ENCODE measurements at regions of chr11 and their contacts with region 1.

Region 1: DNA sequence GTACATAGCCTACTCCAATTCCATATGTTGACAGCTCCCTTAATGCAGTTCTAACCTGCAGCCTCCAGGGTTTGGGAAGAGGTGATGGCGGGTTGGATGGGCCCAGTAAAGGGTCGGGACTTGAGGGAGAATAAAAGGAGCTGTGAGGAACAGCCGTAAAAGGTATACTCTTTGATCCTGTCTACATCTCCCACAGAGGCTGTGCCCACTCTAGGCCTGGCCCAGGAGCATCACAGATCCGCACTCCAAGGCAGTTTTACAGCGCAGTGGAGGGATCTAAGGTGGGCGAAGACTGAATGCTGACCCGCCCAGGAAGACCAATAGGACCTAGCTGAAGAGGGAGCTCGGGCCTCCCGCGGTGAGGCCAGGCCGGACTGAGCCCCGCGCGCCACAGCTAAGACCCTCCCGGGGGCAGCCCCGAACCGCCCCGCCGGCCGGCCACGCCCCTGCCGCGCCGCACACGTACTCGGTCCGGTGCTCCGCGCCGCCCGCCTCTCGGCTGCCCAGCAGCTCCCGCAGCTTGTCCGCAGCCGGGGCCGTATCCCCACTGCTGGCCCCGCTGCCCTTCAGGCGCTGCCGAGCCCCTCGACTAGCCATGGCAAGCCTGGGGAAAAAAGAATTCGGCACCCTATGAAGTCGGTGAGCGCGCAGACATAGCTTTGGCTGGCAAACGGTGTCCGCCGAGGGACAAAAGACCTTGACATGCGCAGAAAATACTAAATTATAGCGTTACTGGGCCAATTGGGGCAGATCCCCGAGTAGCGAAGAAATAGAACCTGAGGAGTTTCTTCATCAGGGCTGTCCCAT is at the start of gene ALG9:
- DNase-seq: peak; percentile 71 to 92 (median 86)
- ATAC-seq: peak; percentile 89 to 91 (median 90)
- H3K4me3 ChIP-seq: peak within 1 kb of the TSS; percentile 72 to 79
- H3K4me3 Mint-ChIP-seq: peak within 1 kb of the TSS; percentile 90 to 94 (median 91)
- H3K27ac ChIP-seq: peak within 1 kb of the TSS; percentile 76
- H3K27ac Mint-ChIP-seq: peak within 1 kb of the TSS; percentile 93 to 94
- H3K4me1 ChIP-seq: peaks cover 4 to 8% of the 10 kb centered on the region in 2 experiments
- H3K4me1 Mint-ChIP-seq: peaks cover 18 to 26% (median 22%) of the 10 kb centered on the region in 3 donors
- H3K27me3 ChIP-seq: no peaks in the 10 kb centered on the region
- H3K27me3 Mint-ChIP-seq: no peaks in the 10 kb centered on the region
- total RNA-seq, gene ALG9: 20.0 to 25.6 (median 24.0) TPM

Region 2: DNA sequence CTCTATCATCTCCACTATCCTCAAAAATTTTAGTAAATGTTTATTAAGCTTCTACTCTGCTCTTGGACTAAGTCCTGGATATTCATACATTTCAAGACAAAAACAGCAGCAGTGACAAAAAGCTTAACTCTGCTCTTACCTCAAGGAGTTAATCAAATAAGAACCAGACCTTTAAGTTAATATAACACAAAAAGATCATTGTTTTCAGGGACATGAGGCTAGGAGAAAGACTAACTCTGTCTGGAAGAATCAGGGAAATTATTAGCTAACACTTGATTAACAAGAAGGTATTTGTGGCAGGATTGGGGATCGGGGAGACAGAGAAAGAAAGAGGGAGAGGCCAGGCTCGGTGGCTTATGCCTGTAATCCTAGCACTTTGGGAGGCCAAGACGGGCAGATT is 179.4 kb before region 1 on chr11:
- CTCF ChIA-PET with region 1: interaction called in 1 of 2 experiments, 10 read pairs
- POLR2A ChIA-PET with region 1: no interaction called
- DNase-seq: no peak
- ATAC-seq: no peak
- H3K4me3 ChIP-seq: no peak overlapping the region
- H3K4me3 Mint-ChIP-seq: no peak overlapping the region
- H3K27ac ChIP-seq: no peak overlapping the region
- H3K27ac Mint-ChIP-seq: no peak overlapping the region
- H3K4me1 ChIP-seq: no peaks in the 10 kb centered on the region
- H3K4me1 Mint-ChIP-seq: peaks cover 0 to 2% (median 0%) of the 10 kb centered on the region in 3 donors
- H3K27me3 ChIP-seq: no peaks in the 10 kb centered on the region
- H3K27me3 Mint-ChIP-seq: no peaks in the 10 kb centered on the region

Region 3: GRCh38 chr11:111911563-111912401 is 40.7 kb after region 1 on chr11 and contains the start of gene CRYAB:
- CTCF ChIA-PET with region 1: no interaction called
- POLR2A ChIA-PET with region 1: no interaction called
- DNase-seq: no peak
- ATAC-seq: no peak
- H3K4me3 ChIP-seq: no peak within 1 kb of the TSS
- H3K4me3 Mint-ChIP-seq: no peak within 1 kb of the TSS
- H3K27ac ChIP-seq: no peak within 1 kb of the TSS
- H3K27ac Mint-ChIP-seq: no peak within 1 kb of the TSS
- H3K4me1 ChIP-seq: peaks cover 0 to 4% of the 10 kb centered on the region in 2 experiments
- H3K4me1 Mint-ChIP-seq: no peaks in the 10 kb centered on the region
- H3K27me3 ChIP-seq: peaks cover 12 to 44% of the 10 kb centered on the region in 2 experiments
- H3K27me3 Mint-ChIP-seq: peaks cover 46 to 60% of the 10 kb centered on the region in 2 donors
- total RNA-seq, gene CRYAB: 0.38 to 0.49 TPM in 2 of 5 donors, not detected in the others

Region 4: GRCh38 chr11:111938687-111939160 is 67.6 kb after region 1 on chr11:
- CTCF ChIA-PET with region 1: no interaction called
- POLR2A ChIA-PET with region 1: interaction called in 1 of 2 experiments, 16 read pairs
- DNase-seq: peak in 10 of 35 experiments; percentile 4 to 51 (median 18)
- ATAC-seq: peak; percentile 56 to 81 (median 66)
- H3K4me3 ChIP-seq: no peak overlapping the region
- H3K4me3 Mint-ChIP-seq: peak overlapping the region; percentile 54 to 93 (median 81)
- H3K27ac ChIP-seq: peak overlapping the region; percentile 54
- H3K27ac Mint-ChIP-seq: peak overlapping the region; percentile 71 to 90
- H3K4me1 ChIP-seq: peaks cover 13 to 28% of the 10 kb centered on the region in 2 experiments
- H3K4me1 Mint-ChIP-seq: peaks cover 30 to 37% (median 31%) of the 10 kb centered on the region in 3 donors
- H3K27me3 ChIP-seq: no peaks in the 10 kb centered on the region
- H3K27me3 Mint-ChIP-seq: no peaks in the 10 kb centered on the region

Region 5: GRCh38 chr11:112042161-112042960 is 171.3 kb after region 1 on chr11:
- CTCF ChIA-PET with region 1: no interaction called
- POLR2A ChIA-PET with region 1: interaction called in 1 of 2 experiments, 16 read pairs
- DNase-seq: no peak
- ATAC-seq: no peak
- H3K4me3 ChIP-seq: no peak overlapping the region
- H3K4me3 Mint-ChIP-seq: no peak overlapping the region
- H3K27ac ChIP-seq: no peak overlapping the region
- H3K27ac Mint-ChIP-seq: no peak overlapping the region
- H3K4me1 ChIP-seq: no peaks in the 10 kb centered on the region
- H3K4me1 Mint-ChIP-seq: peaks cover under 1 to 8% (median 6%) of the 10 kb centered on the region in 3 donors
- H3K27me3 ChIP-seq: no peaks in the 10 kb centered on the region
- H3K27me3 Mint-ChIP-seq: no peaks in the 10 kb centered on the region

Region 6: GRCh38 chr11:112364962-112365481 is 493.9 kb after region 1 on chr11:
- CTCF ChIA-PET with region 1: no interaction called
- POLR2A ChIA-PET with region 1: no interaction called
- DNase-seq: no peak
- ATAC-seq: no peak
- H3K4me3 ChIP-seq: no peak overlapping the region
- H3K4me3 Mint-ChIP-seq: no peak overlapping the region
- H3K27ac ChIP-seq: no peak overlapping the region
- H3K27ac Mint-ChIP-seq: no peak overlapping the region
- H3K4me1 ChIP-seq: no peaks in the 10 kb centered on the region
- H3K4me1 Mint-ChIP-seq: no peaks in the 10 kb centered on the region
- H3K27me3 ChIP-seq: no peaks in the 10 kb centered on the region
- H3K27me3 Mint-ChIP-seq: no peaks in the 10 kb centered on the region

Measured in T-cell (primary cell).